ENCODE measurements at regions of chr1 and their contacts with region 1.

Region 1: DNA sequence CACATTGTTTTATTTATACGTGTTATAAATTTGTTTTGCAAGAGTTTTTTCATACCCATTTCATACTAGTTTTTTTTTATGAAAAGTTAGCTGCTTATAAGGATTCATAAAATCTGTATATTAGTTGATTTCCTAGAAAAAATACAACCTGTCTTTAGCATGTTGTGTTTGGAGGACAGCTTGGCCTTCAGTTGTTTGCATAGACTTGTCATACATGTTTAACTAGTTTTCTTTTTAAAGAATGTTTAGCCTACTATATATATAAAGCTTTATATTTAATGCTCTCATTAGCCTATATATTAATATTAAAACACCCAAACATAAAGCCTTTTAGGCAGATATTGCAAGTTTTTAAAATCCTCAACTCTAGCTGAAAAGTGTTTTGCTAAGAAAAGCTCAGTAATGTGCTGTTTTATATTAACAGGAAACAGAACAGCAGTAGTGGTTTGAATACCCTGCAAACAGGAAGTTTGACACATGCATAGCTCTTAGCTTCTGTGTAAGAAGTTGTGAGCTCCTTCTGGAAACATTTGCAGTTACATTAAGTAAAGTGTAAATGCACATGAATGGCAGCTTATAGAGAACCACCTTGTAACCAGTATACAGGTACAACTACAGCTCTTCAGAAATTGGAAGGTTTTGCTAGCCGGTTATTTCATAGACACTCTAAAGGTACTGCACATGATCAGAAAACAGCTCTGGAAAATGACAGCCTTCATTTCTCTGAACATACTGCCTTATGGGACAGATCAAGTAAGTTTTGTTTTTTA is at the start of gene PRKACB:
- DNase-seq: no peak
- H3K4me3 ChIP-seq: no peak within 1 kb of the TSS
- H3K27ac ChIP-seq: no peak within 1 kb of the TSS
- H3K4me1 ChIP-seq: no peaks in the 10 kb centered on the region
- H3K27me3 ChIP-seq: no peaks in the 10 kb centered on the region
- CTCF ChIP-seq: no peak
- EP300 ChIP-seq: no peak
- POLR2A ChIP-seq: no peak
- total RNA-seq, gene PRKACB: 11.7 to 41.9 (median 32.0) TPM

Region 2: DNA sequence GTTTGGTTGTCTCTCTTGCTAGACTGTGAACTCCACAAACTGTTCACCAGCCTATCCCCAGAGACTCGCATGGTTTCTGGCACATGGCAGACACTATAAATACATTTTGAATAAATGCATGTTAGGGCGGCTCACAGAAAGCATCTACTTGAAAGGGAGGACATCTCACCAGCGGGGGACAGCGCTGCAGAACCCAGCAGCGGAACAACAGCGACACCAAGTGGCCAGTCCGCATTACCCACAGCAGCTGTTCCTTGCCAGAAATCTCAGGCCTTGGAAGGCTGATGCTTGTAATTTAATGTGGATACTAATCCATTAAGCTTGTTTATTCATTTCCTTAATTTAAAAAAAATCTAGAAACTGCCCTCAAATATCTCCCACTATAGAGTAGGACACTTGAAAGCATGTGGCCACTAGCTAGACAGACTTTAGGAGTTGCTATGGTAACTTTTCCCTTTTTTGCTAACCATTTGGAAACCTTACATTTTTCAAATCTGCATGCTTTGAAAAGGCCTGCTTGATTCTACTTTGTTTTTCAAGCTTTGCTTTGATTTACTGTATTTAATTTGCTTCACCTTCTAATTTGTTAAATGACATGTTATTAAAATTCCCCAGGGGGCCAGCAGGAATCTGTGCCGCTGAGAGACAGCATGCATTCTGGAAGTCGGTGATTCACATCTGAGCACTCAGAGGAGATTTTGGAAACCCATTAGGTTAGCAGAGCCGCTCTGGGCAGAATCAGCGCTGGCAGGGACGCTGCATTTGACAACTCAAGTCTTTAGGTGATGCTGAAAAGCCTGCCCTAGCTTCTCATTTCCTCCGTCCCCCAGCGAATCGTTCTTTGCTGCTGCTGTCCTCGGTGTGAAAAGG is 609.8 kb after region 1 on chr1:
- intact Hi-C with region 1: loop called in 1 of 4 experiments (anchors 10 kb)
- DNase-seq: peak; percentile 28 to 78 (median 71)
- H3K4me3 ChIP-seq: no peak overlapping the region
- H3K27ac ChIP-seq: no peak overlapping the region
- H3K4me1 ChIP-seq: no peaks in the 10 kb centered on the region
- H3K27me3 ChIP-seq: no peaks in the 10 kb centered on the region
- CTCF ChIP-seq: peak; percentile 46 to 64 (median 51)
- EP300 ChIP-seq: no peak
- POLR2A ChIP-seq: no peak

Region 3: DNA sequence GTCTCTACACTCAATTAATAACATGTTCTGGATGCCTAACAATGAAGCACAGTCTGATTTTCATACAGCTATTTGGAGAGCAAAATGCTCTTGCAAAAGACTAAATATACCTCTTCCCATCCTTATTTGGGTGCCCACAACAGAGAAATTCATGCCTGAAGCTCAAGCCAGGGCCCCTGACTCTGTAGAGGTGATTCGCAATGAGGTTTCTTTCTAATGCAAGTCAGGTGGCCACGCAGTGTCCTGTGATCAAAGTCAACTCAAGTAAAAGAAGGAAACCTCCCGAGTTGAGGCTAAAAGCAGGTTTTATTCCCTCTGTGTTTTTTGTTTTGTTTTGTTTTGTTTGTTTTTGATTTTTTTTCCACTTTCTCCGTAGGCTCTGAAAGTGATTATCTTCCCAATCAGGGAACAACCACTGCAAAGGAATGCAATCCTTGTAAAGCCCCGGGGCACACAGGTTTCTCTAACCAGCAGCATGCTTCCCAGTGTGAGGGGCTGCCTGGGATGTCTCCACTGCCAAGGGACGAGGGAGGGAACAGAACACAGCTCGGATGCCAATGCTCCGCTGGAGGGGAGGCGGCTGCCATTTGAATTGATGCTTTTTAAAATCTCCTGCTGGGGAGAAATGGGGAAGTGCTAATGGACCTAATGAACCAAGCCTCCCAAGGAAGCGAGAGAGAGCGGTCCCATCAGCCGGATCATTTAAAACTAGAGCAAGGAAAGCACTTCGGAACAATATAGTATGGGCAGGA is 620.1 kb after region 1 on chr1:
- intact Hi-C with region 1: loop called in 2 of 4 experiments (anchors 10 kb)
- DNase-seq: no peak
- H3K4me3 ChIP-seq: no peak overlapping the region
- H3K27ac ChIP-seq: no peak overlapping the region
- H3K4me1 ChIP-seq: peaks cover 7% of the 10 kb centered on the region
- H3K27me3 ChIP-seq: no peaks in the 10 kb centered on the region
- CTCF ChIP-seq: no peak
- EP300 ChIP-seq: no peak
- POLR2A ChIP-seq: no peak

Region 4: GRCh38 chr1:84936116-84936810 is 792.3 kb after region 1 on chr1:
- intact Hi-C with region 1: no loop called
- DNase-seq: peak in 1 of 5 donors; percentile 26
- H3K4me3 ChIP-seq: no peak overlapping the region
- H3K27ac ChIP-seq: no peak overlapping the region
- H3K4me1 ChIP-seq: no peaks in the 10 kb centered on the region
- H3K27me3 ChIP-seq: no peaks in the 10 kb centered on the region
- CTCF ChIP-seq: peak; percentile 65 to 78 (median 68)
- EP300 ChIP-seq: no peak
- POLR2A ChIP-seq: no peak